Mucosa of descending colon (tissue), 3 donors: ENCODE measurements at regions of chr2 and their contacts with region 1.

Region 1: DNA sequence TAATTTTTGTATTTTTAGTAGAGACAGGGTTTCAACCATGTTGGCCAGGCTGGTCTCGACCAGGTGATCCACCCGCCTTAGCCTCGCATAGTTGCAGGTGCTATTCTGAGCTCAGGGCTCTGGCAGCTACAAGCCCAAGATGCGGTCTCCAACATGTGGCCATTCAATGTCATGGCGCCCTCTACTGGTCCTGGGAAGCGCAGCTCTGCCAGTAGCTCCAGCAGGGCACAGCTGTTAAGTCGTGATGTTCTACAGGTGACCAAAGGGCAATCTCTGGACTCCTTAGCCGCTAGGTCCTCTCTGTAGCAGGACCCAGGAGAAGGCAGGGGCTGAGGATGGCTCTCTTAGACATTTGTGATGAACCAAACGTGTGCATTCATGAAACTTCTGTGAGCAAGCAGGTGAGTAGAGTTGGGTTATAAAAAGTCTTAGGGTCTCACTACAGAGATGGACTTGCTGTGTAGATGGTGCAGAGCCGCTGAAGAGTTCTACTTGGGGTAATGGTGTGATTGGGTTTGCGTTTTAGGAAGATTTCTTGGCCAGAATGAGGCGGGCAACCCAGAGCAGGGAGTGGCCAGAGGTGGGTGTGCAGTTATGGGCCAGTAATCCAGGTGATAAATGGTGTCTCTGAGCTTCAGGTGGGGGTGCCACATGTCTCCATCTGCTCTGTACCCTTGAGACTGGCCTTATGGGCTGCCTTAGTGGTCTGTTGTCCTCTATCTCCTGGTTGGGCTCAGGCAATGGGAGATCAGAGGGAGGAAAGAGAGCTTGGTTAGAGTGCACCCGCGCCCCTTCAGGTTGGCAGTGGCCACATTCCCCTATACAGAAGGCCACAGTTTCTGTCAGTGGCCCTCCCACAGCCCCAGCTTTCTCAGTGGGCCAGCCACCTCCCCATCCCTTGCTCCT is 31.0 kb downstream of the IL37 start:
- DNase-seq: peak; percentile 81 to 94 (median 89)
- ATAC-seq: peak; percentile 99
- H3K4me3 ChIP-seq: no peak overlapping the region
- H3K4me1 ChIP-seq: no peaks in the 10 kb centered on the region
- CTCF ChIP-seq: peak; percentile 74

Region 2: DNA sequence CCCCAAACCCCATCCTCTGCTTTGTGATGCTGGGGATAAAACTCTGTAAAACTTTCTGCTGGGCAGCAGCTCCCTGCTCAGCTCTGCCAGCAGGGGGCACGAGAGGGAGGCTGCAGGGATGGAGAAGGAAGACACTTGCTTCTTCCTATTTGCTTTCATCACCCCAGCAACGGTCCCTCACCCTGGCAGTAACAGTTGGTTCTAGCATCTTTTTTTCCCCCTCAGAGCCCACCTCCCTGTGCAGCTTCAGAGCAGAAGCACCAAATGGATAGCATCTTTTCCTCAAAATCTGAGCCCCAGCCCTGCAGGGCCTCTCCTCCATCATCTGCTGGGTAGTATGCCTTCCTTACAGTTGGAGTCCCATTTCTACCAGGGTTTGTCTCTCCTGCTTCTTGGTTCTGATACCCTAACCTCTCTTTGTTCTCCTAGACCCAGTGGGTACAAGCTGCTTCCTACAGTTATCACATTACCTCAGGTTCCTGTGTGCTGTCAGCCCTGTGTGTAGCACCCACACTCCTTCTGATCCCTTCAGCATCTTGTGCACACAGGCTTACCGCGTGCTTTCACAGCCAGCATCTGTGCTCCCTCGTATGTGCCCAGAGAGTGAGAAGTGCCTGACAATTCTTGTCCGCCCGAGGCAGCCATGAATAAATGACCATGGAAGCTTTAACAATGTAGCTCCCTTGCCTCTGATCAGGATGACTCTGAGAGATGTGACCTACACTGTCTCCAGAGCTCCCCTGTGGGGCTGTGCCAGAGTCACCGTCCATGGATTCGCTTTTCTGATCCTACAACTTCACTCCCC is 192.0 kb before region 1 on chr2:
- intact Hi-C with region 1: loop called (anchors 5 to 10 kb)
- DNase-seq: peak; percentile 76 to 90 (median 79)
- ATAC-seq: peak; percentile 97
- H3K4me3 ChIP-seq: no peak overlapping the region
- H3K4me1 ChIP-seq: peaks cover 6% of the 10 kb centered on the region
- CTCF ChIP-seq: peak; percentile 93

Region 3: GRCh38 chr2:113032737-113033136 is 90.7 kb after region 1 on chr2:
- intact Hi-C with region 1: no loop called
- DNase-seq: no peak
- ATAC-seq: peak; percentile 50
- H3K4me3 ChIP-seq: no peak overlapping the region
- H3K4me1 ChIP-seq: no peaks in the 10 kb centered on the region
- CTCF ChIP-seq: no peak

Region 4: GRCh38 chr2:113219889-113220641 is 278.1 kb after region 1 on chr2:
- intact Hi-C with region 1: no loop called
- DNase-seq: peak; percentile 86 to 90 (median 87)
- ATAC-seq: peak; percentile 84
- H3K4me3 ChIP-seq: no peak overlapping the region
- H3K4me1 ChIP-seq: peaks cover 24% of the 10 kb centered on the region
- CTCF ChIP-seq: no peak